WTC11 (cell line): ENCODE measurements at regions of chr4 and their contacts with region 1.

Region 1: DNA sequence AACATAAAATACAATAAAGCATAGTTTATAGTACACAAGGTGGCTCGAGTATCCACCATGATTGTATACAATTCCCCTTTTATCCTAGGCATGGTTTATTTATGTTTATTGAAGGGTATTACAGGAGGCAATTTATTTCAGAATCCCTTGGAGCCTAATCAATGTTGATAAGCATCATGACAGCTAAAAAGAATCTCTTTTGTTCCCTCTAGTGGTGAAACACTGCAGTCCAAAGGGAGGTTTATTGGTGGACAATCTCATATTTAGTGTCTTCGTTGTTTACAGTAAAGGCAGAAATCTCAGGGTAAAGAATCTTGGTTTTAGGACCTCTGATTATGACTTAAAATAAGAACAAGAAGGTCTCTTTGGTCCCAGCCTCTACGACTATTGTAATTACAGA is 1712.5 kb downstream of the C4orf33 start:
- DNase-seq: no peak
- ATAC-seq: peak; percentile 65
- H3K4me3 Mint-ChIP-seq: no peak overlapping the region
- H3K27ac Mint-ChIP-seq: no peak overlapping the region
- H3K4me1 Mint-ChIP-seq: no peaks in the 10 kb centered on the region
- H3K27me3 Mint-ChIP-seq: peaks cover 2% of the 10 kb centered on the region; the same call in 1 of the 2 replicates
- CTCF ChIP-seq: no peak; the same call in 1 of the 2 replicates

Region 2: DNA sequence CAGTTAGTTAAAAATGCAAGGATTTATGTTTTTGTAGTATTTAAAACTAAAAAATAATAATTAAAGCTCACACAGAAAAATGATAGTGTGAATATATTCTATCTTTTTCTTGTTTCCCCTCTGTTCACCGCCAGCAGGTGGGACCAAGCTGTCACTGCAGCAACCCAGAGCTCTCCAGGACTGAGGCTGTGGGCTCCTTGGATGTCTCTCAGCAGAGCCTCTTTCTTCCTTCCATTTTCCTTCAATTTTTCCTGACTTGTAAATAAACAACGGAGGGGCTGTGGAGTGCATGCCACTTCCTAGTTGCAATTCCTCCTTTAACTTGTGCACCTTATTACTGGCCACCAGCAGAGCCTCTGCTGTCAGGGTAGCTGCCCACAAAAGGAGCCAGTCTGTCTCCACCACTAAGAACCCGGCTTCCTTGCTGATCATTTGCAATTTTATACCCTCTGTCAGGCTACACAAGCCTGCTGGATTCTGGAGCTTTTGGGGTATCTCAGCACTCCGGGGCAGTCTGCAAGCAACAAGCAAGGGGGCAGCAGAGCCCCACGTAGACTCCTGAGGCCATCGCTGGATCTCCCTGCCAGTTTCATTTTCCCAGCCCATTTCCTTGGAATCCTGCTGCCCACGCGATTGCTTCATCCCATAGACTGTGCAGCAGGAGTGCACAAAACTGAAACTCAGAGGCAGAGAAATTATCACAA is 245.2 kb before region 1 on chr4:
- CTCF ChIA-PET with region 1: interaction called, 16 read pairs
- POLR2A ChIA-PET with region 1: no interaction called
- DNase-seq: peak; percentile 69
- ATAC-seq: peak; percentile 98
- H3K4me3 Mint-ChIP-seq: peak overlapping the region; percentile 29
- H3K27ac Mint-ChIP-seq: peak overlapping the region; percentile 56
- H3K4me1 Mint-ChIP-seq: peaks cover 14% of the 10 kb centered on the region
- H3K27me3 Mint-ChIP-seq: no peaks in the 10 kb centered on the region
- CTCF ChIP-seq: peak; percentile 45; the same call in 1 of the 2 replicates

Region 3: GRCh38 chr4:130922955-130923354 is 114.5 kb after region 1 on chr4:
- CTCF ChIA-PET with region 1: no interaction called
- POLR2A ChIA-PET with region 1: no interaction called
- DNase-seq: no peak
- ATAC-seq: no peak
- H3K4me3 Mint-ChIP-seq: no peak overlapping the region
- H3K27ac Mint-ChIP-seq: no peak overlapping the region
- H3K4me1 Mint-ChIP-seq: no peaks in the 10 kb centered on the region
- H3K27me3 Mint-ChIP-seq: no peaks in the 10 kb centered on the region
- CTCF ChIP-seq: no peak